GM18951 (cell line): ENCODE measurements at regions of chr3 and their contacts with region 1.

Region 1: GRCh38 chr3:44198284-44199269 is 43.1 kb upstream of the TOPAZ1 start:
- POLR2A ChIP-seq: no peak

Region 2: GRCh38 chr3:44000586-44000985 is 198.0 kb before region 1 on chr3:
- in situ Hi-C with region 1: loop called (anchors 10 kb)
- POLR2A ChIP-seq: no peak

Region 3: GRCh38 chr3:44468572-44469520 is 270.3 kb after region 1 on chr3:
- in situ Hi-C with region 1: no loop called
- POLR2A ChIP-seq: no peak

Region 4: DNA sequence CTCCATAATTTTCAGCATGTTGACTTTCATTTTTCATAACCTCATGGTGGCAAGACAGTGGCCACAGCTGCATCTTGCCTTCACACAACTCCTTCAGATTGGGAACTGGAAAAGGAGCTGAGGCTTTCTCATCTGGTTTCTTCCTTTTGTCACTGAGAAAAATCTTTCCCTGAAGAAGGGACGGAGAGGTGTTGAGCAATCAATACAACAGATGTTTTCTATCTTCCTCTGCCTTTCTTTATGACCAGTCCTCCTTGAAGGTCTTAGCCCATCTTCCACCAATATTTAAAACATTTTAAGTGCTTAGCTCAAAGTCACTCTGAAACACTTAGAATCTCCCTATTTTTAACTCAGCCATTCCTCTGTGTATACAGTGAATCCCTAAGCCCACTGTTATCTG is 398.0 kb after region 1 on chr3:
- in situ Hi-C with region 1: no loop called
- POLR2A ChIP-seq: no peak